ENCODE measurements at regions of chr1 and their contacts with region 1.

Region 1: GRCh38 chr1:225809842-225810578 is at the start of gene EPHX1:
- DNase-seq: peak; percentile 91
- H3K4me3 ChIP-seq: peak within 1 kb of the TSS; percentile 69 to 72
- H3K27ac ChIP-seq: peak within 1 kb of the TSS; percentile 80 to 81
- H3K4me1 ChIP-seq: peaks cover 3% of the 10 kb centered on the region
- H3K27me3 ChIP-seq: no peaks in the 10 kb centered on the region
- CTCF ChIP-seq: peak in 2 of 4 experiments; percentile 32 to 33
- POLR2A ChIP-seq: peak; percentile 85
- total RNA-seq, gene EPHX1: 151 to 232 TPM

Region 2: GRCh38 chr1:225777583-225778336 is 32.2 kb before region 1 on chr1 and contains the start of gene SRP9:
- intact Hi-C with region 1: loop called (anchors 2 kb)
- DNase-seq: peak; percentile 98
- H3K4me3 ChIP-seq: peak within 1 kb of the TSS; percentile 65 to 70
- H3K27ac ChIP-seq: peak within 1 kb of the TSS; percentile 92 to 96
- H3K4me1 ChIP-seq: peaks cover 10% of the 10 kb centered on the region
- H3K27me3 ChIP-seq: no peaks in the 10 kb centered on the region
- CTCF ChIP-seq: peak; percentile 81 to 96 (median 90)
- POLR2A ChIP-seq: peak; percentile 69
- total RNA-seq, gene SRP9: 168 to 324 TPM

Region 3: GRCh38 chr1:225881969-225882693 is 72.1 kb after region 1 on chr1 and contains the start of gene TMEM63A:
- intact Hi-C with region 1: loop called (anchors 5 kb)
- DNase-seq: peak; percentile 91
- H3K4me3 ChIP-seq: peak within 1 kb of the TSS; percentile 78 to 86
- H3K27ac ChIP-seq: peak within 1 kb of the TSS; percentile 94 to 95
- H3K4me1 ChIP-seq: peaks cover 20% of the 10 kb centered on the region
- H3K27me3 ChIP-seq: no peaks in the 10 kb centered on the region
- CTCF ChIP-seq: peak in 3 of 4 experiments; percentile 39 to 63 (median 53)
- POLR2A ChIP-seq: peak; percentile 90
- total RNA-seq, gene TMEM63A: 141 to 192 TPM

Region 4: DNA sequence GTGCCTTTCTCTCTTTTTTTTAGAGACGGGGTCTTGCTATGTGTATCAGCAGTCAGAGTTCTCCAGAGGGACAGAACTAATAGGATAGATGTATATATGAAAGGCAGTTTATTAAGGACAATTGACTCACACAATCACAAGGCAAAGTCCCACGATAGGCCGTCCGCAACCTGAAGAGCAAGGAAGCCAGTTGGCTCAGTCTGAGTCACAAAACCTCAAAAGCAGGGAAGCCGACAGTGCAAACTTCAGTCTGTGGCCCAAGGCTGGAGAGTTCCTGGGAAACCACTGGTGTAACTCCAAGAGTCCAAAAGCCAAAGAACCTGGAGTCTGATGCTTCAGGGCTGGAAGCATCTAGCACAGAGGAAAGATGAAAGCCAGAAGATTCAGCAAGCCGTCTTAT is 236.2 kb after region 1 on chr1:
- intact Hi-C with region 1: no loop called
- DNase-seq: no peak
- H3K4me3 ChIP-seq: no peak overlapping the region
- H3K27ac ChIP-seq: no peak overlapping the region
- H3K4me1 ChIP-seq: no peaks in the 10 kb centered on the region
- H3K27me3 ChIP-seq: no peaks in the 10 kb centered on the region
- CTCF ChIP-seq: no peak
- POLR2A ChIP-seq: no peak